A549 (cell line): ENCODE measurements at regions of chr1 and their contacts with region 1.

Region 1: GRCh38 chr1:150515328-150516048 is at the start of gene FALEC:
- DNase-seq: peak; percentile 96 to 97
- ATAC-seq: peak; percentile 93 to 97
- H3K4me3 ChIP-seq: peak within 1 kb of the TSS; percentile 50
- H3K27ac ChIP-seq: peak within 1 kb of the TSS; percentile 76 to 94
- H3K4me1 ChIP-seq: 0 out of 3 replicates have a peak, but pooled peaks cover 17% of the 10 kb centered on the region
- CTCF ChIP-seq: no peak
- EP300 ChIP-seq: no peak
- POLR2A ChIP-seq: peak; percentile 70
- RAD21 ChIP-seq: no peak
- polyA plus RNA-seq, gene FALEC: 0.36 TPM in 1 of 2 replicates, not detected in the other

Region 2: DNA sequence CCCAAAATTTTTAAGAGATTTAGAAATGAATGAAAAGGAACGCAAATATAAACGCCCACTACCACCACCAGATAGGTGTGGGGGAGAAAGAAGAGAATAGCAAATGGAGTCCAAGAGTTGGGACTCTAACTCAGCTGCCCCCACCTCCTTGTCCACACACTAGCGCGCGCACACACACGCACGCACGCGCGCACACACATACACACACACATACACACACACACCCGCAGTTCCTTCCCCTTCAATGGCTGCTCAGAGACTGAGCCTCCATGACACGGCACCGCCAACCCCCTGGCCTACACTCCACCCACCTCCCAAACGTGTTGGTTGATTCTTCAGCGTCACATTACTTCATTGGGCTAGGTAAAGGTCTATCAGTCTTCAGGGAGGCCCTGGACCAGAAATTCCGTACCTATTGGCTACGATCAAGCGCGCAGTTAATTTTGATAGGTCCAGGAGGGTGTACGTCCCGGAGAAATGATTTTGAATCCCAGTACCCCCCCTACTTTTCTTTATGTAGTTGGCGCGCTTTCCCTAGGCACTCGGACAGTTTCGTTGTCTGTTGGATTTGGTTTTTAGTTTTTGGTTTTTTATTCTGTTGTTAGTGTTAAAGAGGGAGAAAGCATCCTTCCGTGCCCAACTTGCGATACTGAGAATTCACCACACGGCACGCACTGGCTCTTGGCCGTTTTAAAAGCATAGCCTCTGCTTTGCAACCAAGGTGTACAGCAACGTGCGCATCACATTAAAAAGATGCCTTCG is 279.5 kb before region 1 on chr1 and contains the start of gene ANP32E:
- CTCF ChIA-PET with region 1: no interaction called
- POLR2A ChIA-PET with region 1: no interaction called
- DNase-seq: peak; percentile 99 to 100
- ATAC-seq: peak; percentile 91
- H3K4me3 ChIP-seq: peak within 1 kb of the TSS; percentile 77
- H3K27ac ChIP-seq: peak within 1 kb of the TSS; percentile 87 to 98
- H3K4me1 ChIP-seq: peaks cover 15% of the 10 kb centered on the region
- CTCF ChIP-seq: no peak; the same call in 1 of the 3 replicates
- EP300 ChIP-seq: no peak
- POLR2A ChIP-seq: peak; percentile 96
- RAD21 ChIP-seq: no peak
- polyA plus RNA-seq, gene ANP32E: 31.7 and 60.0 TPM in 2 replicates

Region 3: DNA sequence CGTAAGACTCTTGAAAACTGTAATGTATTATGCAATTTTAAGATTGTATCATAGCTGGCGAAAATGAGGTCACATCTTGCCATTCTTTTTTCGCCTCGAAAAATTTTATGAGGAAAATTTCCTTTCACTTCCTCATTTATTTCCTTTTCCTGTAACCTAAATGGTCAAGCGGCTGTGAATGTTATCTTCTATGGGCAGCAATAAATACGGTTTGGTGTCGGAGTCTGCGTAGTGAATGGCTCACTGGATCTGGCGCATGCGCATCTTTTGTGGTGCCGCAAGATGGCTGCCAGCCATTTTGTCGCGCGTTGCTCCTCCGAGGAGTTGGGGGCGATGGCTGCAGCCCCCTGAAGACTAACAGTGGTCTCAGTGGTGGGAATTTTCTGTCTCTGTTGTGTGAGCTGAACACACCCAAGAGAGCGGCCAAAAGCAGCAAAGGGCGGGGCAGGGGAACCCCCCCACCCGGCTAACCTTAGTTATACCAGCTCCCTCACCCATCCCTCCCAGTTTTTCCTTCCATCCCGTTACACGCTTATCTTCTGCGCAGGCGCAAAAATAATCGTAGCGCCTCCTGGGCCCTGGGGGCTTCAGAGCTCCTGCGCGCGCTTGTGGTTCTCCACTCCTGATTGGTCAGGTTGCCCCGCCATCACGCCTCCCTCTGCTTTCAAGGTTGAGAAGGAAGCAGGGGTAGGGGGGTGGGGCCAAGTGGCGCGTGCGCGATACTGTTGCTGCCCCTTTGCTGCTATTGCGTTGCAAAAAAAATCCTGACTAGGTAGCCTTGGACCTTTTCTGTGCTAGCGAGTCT is 151.9 kb before region 1 on chr1 and contains the start of gene RPRD2:
- CTCF ChIA-PET with region 1: no interaction called
- POLR2A ChIA-PET with region 1: interaction called, 17 read pairs
- DNase-seq: peak; percentile 99 to 100
- ATAC-seq: peak; percentile 89 to 94
- H3K4me3 ChIP-seq: peak within 1 kb of the TSS; percentile 68
- H3K27ac ChIP-seq: peak within 1 kb of the TSS; percentile 94
- H3K4me1 ChIP-seq: peaks cover 34% of the 10 kb centered on the region
- CTCF ChIP-seq: no peak
- EP300 ChIP-seq: no peak
- POLR2A ChIP-seq: peak; percentile 90
- RAD21 ChIP-seq: no peak
- polyA plus RNA-seq, gene RPRD2: 20.8 and 21.1 TPM in 2 replicates

Region 4: GRCh38 chr1:150486964-150487762 is 28.3 kb before region 1 on chr1 and contains the start of gene TARS2:
- CTCF ChIA-PET with region 1: interaction called, 8 read pairs
- POLR2A ChIA-PET with region 1: interaction called, 10 read pairs
- DNase-seq: peak; percentile 93 to 99
- ATAC-seq: peak; percentile 99 to 100
- H3K4me3 ChIP-seq: peak within 1 kb of the TSS; percentile 71
- H3K27ac ChIP-seq: peak within 1 kb of the TSS; percentile 87 to 94
- H3K4me1 ChIP-seq: peaks cover 7% of the 10 kb centered on the region; the same call in 2 of the 3 replicates
- CTCF ChIP-seq: no peak
- EP300 ChIP-seq: no peak
- POLR2A ChIP-seq: peak; percentile 73
- RAD21 ChIP-seq: peak in 1 of 2 experiments; percentile 8; a peak in 1 of 5 replicates
- polyA plus RNA-seq, gene TARS2: 21.6 and 24.5 TPM in 2 replicates

Region 5: DNA sequence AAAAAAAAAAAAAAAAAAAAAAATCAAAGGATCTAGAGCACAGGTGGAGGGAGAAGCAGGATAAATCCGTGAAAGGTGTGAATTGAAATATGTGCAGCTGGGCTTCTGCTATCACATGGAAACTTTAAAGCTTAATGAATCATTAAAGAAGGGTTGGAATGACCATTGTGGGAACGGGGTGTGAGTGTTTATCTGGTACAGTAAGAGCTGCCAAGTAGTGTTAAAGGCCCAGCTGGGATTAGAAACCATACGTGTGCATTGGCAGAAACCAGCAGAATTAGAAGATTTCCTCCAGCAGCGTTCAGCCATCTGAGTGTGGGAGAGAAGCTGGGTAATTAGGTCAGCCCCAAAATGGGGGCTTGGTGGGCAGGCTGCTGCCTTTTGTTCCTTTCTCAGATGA is 13.5 kb after region 1 on chr1:
- CTCF ChIA-PET with region 1: interaction called, 114 read pairs
- POLR2A ChIA-PET with region 1: interaction called, 12 read pairs
- DNase-seq: no peak
- ATAC-seq: no peak
- H3K4me3 ChIP-seq: no peak overlapping the region
- H3K27ac ChIP-seq: peak overlapping the region in 1 of 2 experiments; percentile 37; a peak in 1 of 6 replicates
- H3K4me1 ChIP-seq: peaks cover 16% of the 10 kb centered on the region; the same call in 2 of the 3 replicates
- CTCF ChIP-seq: no peak
- EP300 ChIP-seq: no peak
- POLR2A ChIP-seq: no peak
- RAD21 ChIP-seq: no peak

Region 6: DNA sequence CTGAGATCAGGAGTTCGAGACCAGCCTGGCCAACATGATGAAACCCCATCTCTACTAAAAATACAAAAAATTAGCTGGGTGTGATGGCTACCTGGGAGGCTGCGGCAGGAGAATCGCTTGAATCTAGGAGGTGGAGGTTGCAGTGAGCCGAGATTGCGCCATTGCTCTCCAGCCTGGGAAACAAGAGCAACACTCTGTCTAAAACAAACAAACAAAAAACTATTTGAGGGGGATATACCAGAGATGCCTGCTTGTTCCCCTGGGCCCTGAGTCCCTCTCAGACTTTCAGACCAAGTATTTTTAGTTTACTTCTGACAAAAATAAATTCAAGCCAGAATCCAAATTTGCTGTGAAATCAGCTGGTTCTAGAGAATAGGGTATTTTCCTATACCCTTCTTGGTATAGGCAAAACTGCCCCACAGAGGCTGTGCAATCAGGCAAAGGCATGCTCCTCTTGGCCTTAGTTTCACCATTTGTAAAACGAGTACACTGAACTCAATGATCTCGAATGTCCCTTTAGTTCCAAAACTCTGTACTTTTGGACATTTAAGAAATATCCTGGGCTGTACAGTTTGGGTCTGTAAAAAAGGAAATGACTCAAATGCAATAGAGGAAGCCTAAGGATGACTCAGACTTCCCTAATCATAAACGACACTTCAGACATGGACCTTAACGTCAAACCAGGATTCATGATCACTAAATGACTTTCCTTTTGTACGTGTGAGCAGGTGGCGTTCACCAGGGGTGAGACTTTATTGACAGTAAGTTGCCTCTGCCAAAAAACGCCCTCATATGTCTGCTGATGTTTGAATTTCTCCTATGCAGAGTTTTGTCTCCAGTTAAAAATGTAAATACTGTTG is 97.8 kb after region 1 on chr1:
- CTCF ChIA-PET with region 1: no interaction called
- POLR2A ChIA-PET with region 1: no interaction called
- DNase-seq: peak; percentile 66 to 90
- ATAC-seq: peak; percentile 63 to 65
- H3K4me3 ChIP-seq: peak overlapping the region; percentile 13; the same call in 1 of the 3 replicates
- H3K27ac ChIP-seq: peak overlapping the region; percentile 89 to 95
- H3K4me1 ChIP-seq: peaks cover 60% of the 10 kb centered on the region
- CTCF ChIP-seq: no peak
- EP300 ChIP-seq: peak; percentile 66; a peak in 2 of 5 replicates
- POLR2A ChIP-seq: no peak
- RAD21 ChIP-seq: no peak